ENCODE measurements at regions of chr18 and their contacts with region 1.

Region 1: GRCh38 chr18:741931-742512 is 29.6 kb upstream of the ENOSF1 start:
- DNase-seq: no peak
- H3K4me3 ChIP-seq: no peak overlapping the region
- H3K27ac ChIP-seq: no peak overlapping the region
- H3K4me1 ChIP-seq: no peaks in the 10 kb centered on the region
- H3K27me3 ChIP-seq: no peaks in the 10 kb centered on the region
- CTCF ChIP-seq: peak; percentile 55

Region 2: GRCh38 chr18:830315-830901 is 88.4 kb after region 1 on chr18:
- intact Hi-C with region 1: loop called (anchors 2 kb)
- DNase-seq: no peak
- H3K4me3 ChIP-seq: no peak overlapping the region
- H3K27ac ChIP-seq: no peak overlapping the region
- H3K4me1 ChIP-seq: no peaks in the 10 kb centered on the region
- H3K27me3 ChIP-seq: no peaks in the 10 kb centered on the region
- CTCF ChIP-seq: no peak